CD14-positive monocyte (primary cell): ENCODE measurements at regions of chr22 and their contacts with region 1.

Region 1: DNA sequence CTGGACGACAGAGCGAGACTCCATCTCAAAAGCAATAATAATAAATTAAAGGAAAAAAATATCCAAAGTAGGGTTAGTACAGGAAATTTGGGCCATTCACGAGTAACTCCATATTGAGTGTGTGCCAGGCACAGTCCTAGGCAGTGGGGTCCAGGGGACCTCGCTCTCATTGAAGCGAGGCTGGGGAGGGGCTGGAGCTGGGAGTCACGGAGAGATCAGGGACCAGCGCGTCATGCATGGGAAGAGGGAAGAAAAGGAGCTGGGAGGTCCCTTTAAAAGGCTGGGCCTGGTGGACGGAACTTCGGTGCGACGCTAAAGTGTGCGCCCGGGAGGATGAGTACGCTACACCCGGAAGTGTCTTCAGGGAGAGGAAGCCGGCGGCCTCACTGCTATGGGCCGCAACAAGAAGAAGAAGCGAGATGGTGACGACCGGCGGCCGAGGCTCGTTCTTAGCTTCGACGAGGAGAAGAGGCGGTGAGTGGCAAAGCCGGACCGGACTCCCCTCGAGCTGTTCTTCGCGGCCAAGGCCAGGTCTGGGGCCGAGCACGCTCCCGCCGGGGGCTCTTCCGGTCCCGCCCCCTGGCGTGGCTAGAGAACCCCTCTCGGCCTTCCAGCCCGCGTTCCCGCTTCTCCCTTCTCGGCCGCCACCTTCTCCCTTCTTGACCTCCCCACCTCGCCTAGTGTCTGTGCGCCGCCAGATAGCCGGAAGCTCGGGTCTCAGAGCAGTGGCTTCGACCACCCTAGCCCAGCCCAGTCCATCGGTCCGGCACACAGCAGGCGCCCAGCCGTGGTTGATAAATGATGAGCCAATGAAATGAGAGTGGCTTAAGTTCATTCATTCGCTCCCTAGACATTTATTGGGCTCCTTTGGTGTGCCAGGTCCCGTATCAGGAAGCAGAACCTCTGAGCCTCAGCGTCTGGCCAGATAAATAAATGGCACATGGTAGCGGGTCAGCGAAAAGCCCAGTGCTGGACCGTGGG is at the start of gene NOL12:
- DNase-seq: peak; percentile 81 to 84 (median 82)
- H3K4me3 ChIP-seq: peak within 1 kb of the TSS; percentile 70 to 100 (median 95)
- H3K4me3 Mint-ChIP-seq: peak within 1 kb of the TSS; percentile 99
- H3K27ac ChIP-seq: peak within 1 kb of the TSS; percentile 85 to 86
- H3K27ac Mint-ChIP-seq: peak within 1 kb of the TSS; percentile 89 to 98 (median 93)
- H3K4me1 ChIP-seq: peaks cover 29 to 31% of the 10 kb centered on the region in 2 donors
- H3K4me1 Mint-ChIP-seq: peaks cover 30% of the 10 kb centered on the region
- H3K27me3 ChIP-seq: no peaks in the 10 kb centered on the region
- H3K27me3 Mint-ChIP-seq: no peaks in the 10 kb centered on the region
- CTCF ChIP-seq: no peak
- polyA plus RNA-seq, gene NOL12: 47.3 to 52.0 (median 49.2) TPM

Region 2: GRCh38 chr22:37672206-37672919 is 13.9 kb before region 1 on chr22:
- intact Hi-C with region 1: no loop called
- DNase-seq: no peak
- H3K4me3 ChIP-seq: peak overlapping the region in 1 of 3 experiments; percentile 38
- H3K4me3 Mint-ChIP-seq: peak overlapping the region; percentile 26 to 41
- H3K27ac ChIP-seq: no peak overlapping the region
- H3K27ac Mint-ChIP-seq: peak overlapping the region in 1 of 7 donors; percentile 58
- H3K4me1 ChIP-seq: peaks cover 51 to 57% of the 10 kb centered on the region in 2 donors
- H3K4me1 Mint-ChIP-seq: peaks cover 36% of the 10 kb centered on the region
- H3K27me3 ChIP-seq: no peaks in the 10 kb centered on the region
- H3K27me3 Mint-ChIP-seq: peaks cover 0 to 4% (median 2%) of the 10 kb centered on the region in 3 donors
- CTCF ChIP-seq: no peak

Region 3: DNA sequence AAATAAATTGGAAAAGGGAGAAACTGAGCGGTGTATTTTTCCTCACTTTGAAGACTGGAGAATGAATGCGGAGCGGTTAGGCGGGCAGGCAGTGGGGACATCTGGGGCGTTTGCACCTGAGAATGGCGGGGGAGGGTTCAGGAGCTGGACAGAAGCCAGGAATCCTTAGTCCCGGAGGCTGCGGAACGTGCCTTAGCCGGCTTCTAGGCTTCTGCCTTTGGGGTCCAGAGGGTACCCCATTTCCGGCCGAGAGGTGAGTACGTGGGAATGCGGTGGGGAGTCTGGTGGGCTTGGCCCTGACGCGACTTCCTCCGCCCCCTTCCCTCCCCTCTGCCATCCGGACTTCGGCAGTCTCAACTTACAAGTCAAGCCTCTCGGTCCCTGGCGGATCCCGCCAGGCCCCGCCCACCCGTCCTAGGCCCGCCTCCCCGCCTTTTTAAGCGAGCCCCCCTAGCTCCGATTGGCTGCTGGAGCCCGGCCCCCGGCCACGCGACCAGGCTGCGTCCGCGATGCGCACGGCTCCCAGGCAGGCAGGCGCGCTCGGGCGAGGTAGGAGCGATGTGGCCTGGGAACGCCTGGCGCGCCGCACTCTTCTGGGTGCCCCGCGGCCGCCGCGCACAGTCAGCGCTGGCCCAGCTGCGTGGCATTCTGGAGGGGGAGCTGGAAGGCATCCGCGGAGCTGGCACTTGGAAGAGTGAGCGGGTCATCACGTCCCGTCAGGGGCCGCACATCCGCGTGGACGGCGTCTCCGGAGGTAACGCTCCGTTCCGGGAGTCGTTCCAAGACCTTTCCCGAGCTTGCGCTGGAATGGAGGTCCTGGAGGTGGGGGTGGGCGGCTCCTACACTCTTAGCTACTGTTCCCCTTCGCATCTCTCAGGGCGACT is 121.4 kb after region 1 on chr22 and contains the start of gene GCAT:
- intact Hi-C with region 1: loop called in 1 of 2 experiments (anchors 10 kb)
- DNase-seq: peak; percentile 77 to 83 (median 78)
- H3K4me3 ChIP-seq: peak within 1 kb of the TSS; percentile 42 to 75 (median 59)
- H3K4me3 Mint-ChIP-seq: peak within 1 kb of the TSS; percentile 87 to 96
- H3K27ac ChIP-seq: no peak within 1 kb of the TSS
- H3K27ac Mint-ChIP-seq: peak within 1 kb of the TSS in 2 of 7 donors; percentile 57 to 63
- H3K4me1 ChIP-seq: peaks cover 52 to 61% of the 10 kb centered on the region in 2 donors
- H3K4me1 Mint-ChIP-seq: peaks cover 49% of the 10 kb centered on the region
- H3K27me3 ChIP-seq: peaks cover 27 to 51% of the 10 kb centered on the region in 2 donors
- H3K27me3 Mint-ChIP-seq: peaks cover 52 to 64% (median 54%) of the 10 kb centered on the region in 3 donors
- CTCF ChIP-seq: no peak
- polyA plus RNA-seq, gene GCAT: 0.56 to 1.9 (median 1.1) TPM